IMR-90 (cell line): ENCODE measurements at regions of chr4 and their contacts with region 1.

Region 1: GRCh38 chr4:122758033-122758432 is 25.5 kb downstream of the BBS12 start:
- DNase-seq: peak; percentile 51
- ATAC-seq: peak; percentile 68
- H3K4me3 ChIP-seq: no peak overlapping the region
- H3K27ac ChIP-seq: no peak overlapping the region
- H3K4me1 ChIP-seq: no peaks in the 10 kb centered on the region
- H3K27me3 ChIP-seq: no peaks in the 10 kb centered on the region
- CTCF ChIP-seq: peak; percentile 77
- POLR2A ChIP-seq: no peak
- RAD21 ChIP-seq: peak; percentile 72

Region 2: GRCh38 chr4:122914292-122914904 is 156.4 kb after region 1 on chr4:
- CTCF ChIA-PET with region 1: interaction called, 20 read pairs
- POLR2A ChIA-PET with region 1: no interaction called
- dilution Hi-C with region 1: loop called (anchors 25 kb)
- in situ Hi-C with region 1: no loop called
- intact Hi-C with region 1: loop called (anchors 1 kb)
- DNase-seq: peak; percentile 68
- ATAC-seq: peak; percentile 89
- H3K4me3 ChIP-seq: no peak overlapping the region; the same call in 1 of the 2 replicates
- H3K27ac ChIP-seq: no peak overlapping the region
- H3K4me1 ChIP-seq: peaks cover 9% of the 10 kb centered on the region
- H3K27me3 ChIP-seq: no peaks in the 10 kb centered on the region
- CTCF ChIP-seq: peak; percentile 75
- POLR2A ChIP-seq: no peak
- RAD21 ChIP-seq: peak; percentile 84

Region 3: DNA sequence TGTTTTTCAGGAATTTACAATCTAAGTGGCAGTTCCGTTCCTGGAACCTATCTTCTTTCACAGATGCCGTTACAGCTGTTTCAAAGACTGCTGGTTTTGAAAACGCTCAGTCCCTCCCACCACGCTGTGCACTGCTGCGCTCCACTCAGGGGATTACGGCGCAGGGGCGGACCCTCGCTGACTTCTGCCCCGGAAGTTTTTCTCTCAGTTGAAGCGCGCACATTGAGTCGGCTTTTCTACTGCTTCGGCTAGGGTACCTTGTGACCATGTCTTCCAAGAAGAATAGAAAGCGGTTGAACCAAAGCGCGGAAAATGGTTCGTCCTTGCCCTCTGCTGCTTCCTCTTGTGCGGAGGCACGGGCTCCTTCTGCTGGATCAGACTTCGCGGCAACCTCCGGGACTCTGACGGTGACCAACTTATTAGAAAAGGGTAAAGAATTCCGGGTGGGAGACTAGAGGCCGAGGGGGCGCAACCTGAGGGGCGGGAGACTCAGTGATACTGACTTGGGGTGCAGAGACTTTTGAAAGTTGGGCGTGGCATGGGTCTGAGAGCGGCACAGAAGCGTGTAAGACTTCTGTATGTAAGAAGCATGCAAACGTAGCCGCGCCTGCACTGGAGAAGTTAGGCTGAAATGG is 165.0 kb after region 1 on chr4:
- CTCF ChIA-PET with region 1: no interaction called
- POLR2A ChIA-PET with region 1: no interaction called
- dilution Hi-C with region 1: loop called (anchors 25 kb)
- in situ Hi-C with region 1: loop called (anchors 5 kb)
- intact Hi-C with region 1: no loop called
- DNase-seq: peak; percentile 82
- ATAC-seq: peak; percentile 94
- H3K4me3 ChIP-seq: peak overlapping the region; percentile 93
- H3K27ac ChIP-seq: peak overlapping the region; percentile 83
- H3K4me1 ChIP-seq: no peaks in the 10 kb centered on the region
- H3K27me3 ChIP-seq: no peaks in the 10 kb centered on the region
- CTCF ChIP-seq: no peak
- POLR2A ChIP-seq: no peak
- RAD21 ChIP-seq: no peak

Region 4: GRCh38 chr4:123200051-123200940 is 442.3 kb after region 1 on chr4:
- CTCF ChIA-PET with region 1: no interaction called
- POLR2A ChIA-PET with region 1: no interaction called
- dilution Hi-C with region 1: no loop called
- in situ Hi-C with region 1: no loop called
- intact Hi-C with region 1: no loop called
- DNase-seq: no peak
- ATAC-seq: no peak
- H3K4me3 ChIP-seq: no peak overlapping the region
- H3K27ac ChIP-seq: no peak overlapping the region
- H3K4me1 ChIP-seq: peaks cover 3% of the 10 kb centered on the region
- H3K27me3 ChIP-seq: no peaks in the 10 kb centered on the region
- CTCF ChIP-seq: no peak
- POLR2A ChIP-seq: no peak
- RAD21 ChIP-seq: no peak